CD4-positive, alpha-beta memory T cell (primary cell): ENCODE measurements at regions of chr5 and their contacts with region 1.

Region 1: GRCh38 chr5:61331407-61332357 is at the start of gene ZSWIM6:
- DNase-seq: peak; percentile 96 to 99 (median 98)
- H3K4me3 ChIP-seq: peak within 1 kb of the TSS; percentile 42 to 88
- H3K4me3 Mint-ChIP-seq: peak within 1 kb of the TSS; percentile 82 to 100 (median 95)
- H3K27ac ChIP-seq: peak within 1 kb of the TSS; percentile 82
- H3K27ac Mint-ChIP-seq: peak within 1 kb of the TSS; percentile 91 to 99 (median 97)
- H3K4me1 ChIP-seq: peaks cover 24% of the 10 kb centered on the region
- H3K4me1 Mint-ChIP-seq: peaks cover 21 to 51% (median 28%) of the 10 kb centered on the region in 4 donors
- H3K27me3 ChIP-seq: no peaks in the 10 kb centered on the region
- H3K27me3 Mint-ChIP-seq: peaks cover 15 to 18% of the 10 kb centered on the region in 2 donors
- total RNA-seq, gene ZSWIM6: 10.3 to 11.3 TPM

Region 2: GRCh38 chr5:60944904-60945812 is 386.5 kb before region 1 on chr5 and contains the starts of genes ERCC8 and NDUFAF2:
- CTCF ChIA-PET with region 1: no interaction called
- POLR2A ChIA-PET with region 1: interaction called, 15 read pairs
- intact Hi-C with region 1: loop called (anchors 1 kb)
- DNase-seq: peak; percentile 86 to 90 (median 89)
- H3K4me3 ChIP-seq: peak within 1 kb of the TSS; percentile 92 to 94
- H3K4me3 Mint-ChIP-seq: no peak within 1 kb of the TSS
- H3K27ac ChIP-seq: peak within 1 kb of the TSS; percentile 60
- H3K27ac Mint-ChIP-seq: peak within 1 kb of the TSS in 3 of 7 donors; percentile 45 to 89 (median 75)
- H3K4me1 ChIP-seq: peaks cover 21% of the 10 kb centered on the region
- H3K4me1 Mint-ChIP-seq: peaks cover 18 to 28% (median 23%) of the 10 kb centered on the region in 4 donors
- H3K27me3 ChIP-seq: no peaks in the 10 kb centered on the region
- H3K27me3 Mint-ChIP-seq: no peaks in the 10 kb centered on the region
- total RNA-seq, gene ERCC8: 7.1 to 9.0 TPM
- total RNA-seq, gene NDUFAF2: 14.7 to 14.8 TPM

Region 3: DNA sequence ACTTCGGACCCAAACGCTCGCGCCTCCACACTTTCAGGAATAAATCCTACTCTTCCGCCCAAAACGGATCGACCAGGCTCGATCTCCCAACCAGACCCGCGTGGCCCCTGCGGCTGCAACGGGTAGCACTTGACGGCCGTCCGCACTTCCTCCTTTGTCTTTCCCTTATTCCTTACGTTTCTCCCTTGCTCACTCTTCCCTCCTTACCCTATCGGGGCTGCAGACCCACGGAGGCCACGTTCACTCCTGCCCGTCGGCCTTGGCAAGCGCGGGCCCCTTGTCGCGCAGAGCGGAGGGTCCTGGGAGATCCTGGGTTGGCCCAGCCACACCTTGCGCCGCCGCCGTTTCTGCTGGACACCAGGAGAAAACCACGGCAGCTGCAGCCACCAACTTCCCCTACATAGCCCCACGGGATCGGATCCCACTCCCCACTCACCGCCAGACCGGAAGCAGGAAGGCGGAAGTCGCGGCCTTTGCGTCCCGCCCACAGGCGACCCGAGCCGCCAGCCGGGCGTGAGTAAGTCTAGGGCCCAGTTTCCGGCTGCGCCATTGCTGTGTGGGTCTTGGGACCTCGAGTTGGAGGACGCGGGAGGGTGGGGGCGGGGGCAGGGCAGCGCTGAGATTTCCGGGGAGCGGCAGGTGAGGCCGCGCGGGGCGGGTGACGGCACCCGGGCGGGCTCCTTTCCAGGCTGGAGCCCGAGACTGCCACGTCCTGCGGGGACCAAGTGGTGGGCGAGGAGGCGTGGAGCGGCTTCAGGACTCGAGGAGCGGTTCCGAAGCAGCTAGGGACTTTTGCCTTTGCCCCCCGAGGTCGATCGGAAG is 169.5 kb before region 1 on chr5 and contains the start of gene SMIM15:
- CTCF ChIA-PET with region 1: interaction called, 3 read pairs
- POLR2A ChIA-PET with region 1: interaction called, 21 read pairs
- intact Hi-C with region 1: loop called (anchors 1 kb)
- DNase-seq: peak; percentile 67 to 77 (median 72)
- H3K4me3 ChIP-seq: peak within 1 kb of the TSS; percentile 88
- H3K4me3 Mint-ChIP-seq: peak within 1 kb of the TSS; percentile 92 to 100 (median 96)
- H3K27ac ChIP-seq: peak within 1 kb of the TSS; percentile 67
- H3K27ac Mint-ChIP-seq: peak within 1 kb of the TSS; percentile 89 to 99 (median 96)
- H3K4me1 ChIP-seq: peaks cover 26% of the 10 kb centered on the region
- H3K4me1 Mint-ChIP-seq: peaks cover 29 to 46% (median 38%) of the 10 kb centered on the region in 4 donors
- H3K27me3 ChIP-seq: no peaks in the 10 kb centered on the region
- H3K27me3 Mint-ChIP-seq: no peaks in the 10 kb centered on the region
- total RNA-seq, gene SMIM15: 33.1 to 37.7 TPM

Region 4: DNA sequence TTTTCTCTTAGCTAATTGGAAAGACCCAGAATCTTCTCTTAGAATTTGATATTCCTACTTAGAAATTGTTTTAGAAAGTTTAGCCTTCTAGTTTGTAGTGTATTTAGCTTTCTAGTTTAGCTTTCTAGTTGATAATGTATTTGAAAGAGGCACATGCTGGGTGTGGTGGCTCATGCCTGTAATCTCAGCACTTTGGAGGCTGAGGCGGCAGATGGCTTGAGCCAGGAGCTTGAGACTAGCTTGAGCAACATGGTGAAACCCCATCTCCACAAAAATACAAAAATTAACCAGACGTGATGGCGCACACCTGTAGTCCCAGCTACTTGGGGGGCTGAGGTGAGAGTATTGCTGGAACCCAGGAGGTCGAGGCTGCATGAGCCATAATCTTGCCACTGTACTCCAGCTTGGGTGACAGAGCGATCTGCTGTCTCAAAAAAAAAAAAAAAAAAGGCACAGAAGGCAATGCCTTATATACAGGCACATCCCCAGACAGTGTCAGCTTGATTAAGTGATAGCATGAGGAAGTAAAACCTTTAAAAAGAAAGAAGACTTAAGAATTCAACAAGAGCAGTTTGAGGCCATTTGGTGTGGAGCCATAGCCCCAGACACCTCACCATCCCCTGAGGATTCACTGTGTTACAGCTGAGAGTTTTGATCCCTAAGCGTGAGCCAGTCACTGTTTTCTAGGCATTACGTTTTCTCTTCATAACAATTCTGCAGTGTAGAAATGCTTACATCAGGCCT is 35.0 kb after region 1 on chr5:
- CTCF ChIA-PET with region 1: no interaction called
- POLR2A ChIA-PET with region 1: no interaction called
- intact Hi-C with region 1: no loop called
- DNase-seq: no peak
- H3K4me3 ChIP-seq: no peak overlapping the region
- H3K4me3 Mint-ChIP-seq: peak overlapping the region in 1 of 8 donors; percentile 53
- H3K27ac ChIP-seq: no peak overlapping the region
- H3K27ac Mint-ChIP-seq: peak overlapping the region in 1 of 7 donors; percentile 5
- H3K4me1 ChIP-seq: no peaks in the 10 kb centered on the region
- H3K4me1 Mint-ChIP-seq: peaks cover 0 to 14% (median 7%) of the 10 kb centered on the region in 4 donors
- H3K27me3 ChIP-seq: no peaks in the 10 kb centered on the region
- H3K27me3 Mint-ChIP-seq: no peaks in the 10 kb centered on the region

Region 5: GRCh38 chr5:61408476-61409168 is 76.9 kb after region 1 on chr5:
- CTCF ChIA-PET with region 1: interaction called, 13 read pairs
- POLR2A ChIA-PET with region 1: interaction called, 76 read pairs
- intact Hi-C with region 1: loop called (anchors 1 kb)
- DNase-seq: peak; percentile 96 to 99 (median 98)
- H3K4me3 ChIP-seq: no peak overlapping the region
- H3K4me3 Mint-ChIP-seq: peak overlapping the region; percentile 78 to 91 (median 84)
- H3K27ac ChIP-seq: no peak overlapping the region
- H3K27ac Mint-ChIP-seq: peak overlapping the region; percentile 86 to 97 (median 94)
- H3K4me1 ChIP-seq: peaks cover 19% of the 10 kb centered on the region
- H3K4me1 Mint-ChIP-seq: peaks cover 18 to 35% (median 26%) of the 10 kb centered on the region in 4 donors
- H3K27me3 ChIP-seq: no peaks in the 10 kb centered on the region
- H3K27me3 Mint-ChIP-seq: peaks cover 0 to 2% of the 10 kb centered on the region in 2 donors

Region 6: DNA sequence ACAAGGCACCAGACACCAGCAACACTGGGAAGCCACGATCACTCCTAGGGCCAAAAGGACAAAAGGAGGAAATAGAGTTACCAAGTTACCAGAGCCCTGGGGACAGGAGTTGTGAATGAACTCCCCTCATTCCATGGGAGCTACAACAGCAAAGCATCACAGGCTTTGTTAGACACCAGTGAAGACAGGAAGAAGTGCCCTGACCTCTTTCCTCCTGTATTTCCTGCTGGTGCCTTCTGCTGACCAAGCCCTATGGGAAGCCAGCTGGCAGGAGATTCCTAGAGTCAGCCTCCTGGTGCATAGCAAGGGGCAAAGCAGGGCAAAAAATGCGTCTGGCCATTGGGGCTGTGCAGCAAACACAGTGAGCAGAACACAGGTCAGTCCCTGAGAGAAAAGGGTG is 375.1 kb after region 1 on chr5:
- CTCF ChIA-PET with region 1: no interaction called
- POLR2A ChIA-PET with region 1: no interaction called
- intact Hi-C with region 1: no loop called
- DNase-seq: no peak
- H3K4me3 ChIP-seq: no peak overlapping the region
- H3K4me3 Mint-ChIP-seq: no peak overlapping the region
- H3K27ac ChIP-seq: no peak overlapping the region
- H3K27ac Mint-ChIP-seq: no peak overlapping the region
- H3K4me1 ChIP-seq: no peaks in the 10 kb centered on the region
- H3K4me1 Mint-ChIP-seq: no peaks in the 10 kb centered on the region
- H3K27me3 ChIP-seq: no peaks in the 10 kb centered on the region
- H3K27me3 Mint-ChIP-seq: peaks cover 6 to 8% of the 10 kb centered on the region in 2 donors

Region 7: GRCh38 chr5:62305715-62306322 is 974.1 kb after region 1 on chr5 and contains the start of gene KIF2A:
- CTCF ChIA-PET with region 1: no interaction called
- POLR2A ChIA-PET with region 1: interaction called, 7 read pairs
- intact Hi-C with region 1: loop called (anchors 2 kb)
- DNase-seq: peak; percentile 93 to 96 (median 95)
- H3K4me3 ChIP-seq: peak within 1 kb of the TSS; percentile 73 to 82
- H3K4me3 Mint-ChIP-seq: peak within 1 kb of the TSS; percentile 97 to 100 (median 99)
- H3K27ac ChIP-seq: peak within 1 kb of the TSS; percentile 76
- H3K27ac Mint-ChIP-seq: peak within 1 kb of the TSS; percentile 97 to 100 (median 99)
- H3K4me1 ChIP-seq: peaks cover 48% of the 10 kb centered on the region
- H3K4me1 Mint-ChIP-seq: peaks cover 39 to 57% (median 47%) of the 10 kb centered on the region in 4 donors
- H3K27me3 ChIP-seq: no peaks in the 10 kb centered on the region
- H3K27me3 Mint-ChIP-seq: no peaks in the 10 kb centered on the region
- total RNA-seq, gene KIF2A: 151 to 157 TPM